Natural killer cell (primary cell): ENCODE measurements at regions of chr20 and their contacts with region 1.

Region 1: DNA sequence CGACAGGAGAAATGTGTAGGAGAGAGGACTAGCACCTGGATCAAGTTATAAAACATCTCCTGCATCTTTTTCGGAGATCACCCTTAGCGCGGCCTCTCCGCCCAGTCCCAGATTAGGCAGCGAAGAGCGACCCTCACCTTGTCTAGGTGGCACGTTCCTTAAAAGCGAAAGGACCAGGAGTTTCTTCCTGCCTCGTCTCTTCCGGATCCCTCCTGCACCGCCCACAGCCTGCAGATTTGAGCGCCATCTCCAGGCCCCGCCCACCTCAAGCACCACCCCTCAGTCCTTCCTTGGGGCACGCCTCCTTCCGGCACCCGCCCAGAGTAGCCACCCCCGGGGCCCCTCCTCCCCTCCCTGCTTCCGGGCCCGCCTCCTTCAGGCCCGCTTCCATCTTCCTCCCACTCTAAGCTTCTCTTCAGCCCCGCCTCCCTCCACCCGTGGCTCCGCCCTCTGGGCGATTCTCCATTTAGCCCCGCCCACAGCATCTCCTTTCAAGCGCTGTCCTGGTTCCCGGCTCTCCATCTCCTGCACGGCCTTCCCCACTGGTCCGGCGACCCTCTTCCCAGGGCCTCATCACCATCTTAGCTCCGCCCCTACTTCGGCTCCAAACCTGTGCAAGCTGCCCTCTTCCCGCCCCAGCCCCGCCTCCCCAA is 662 bp upstream of the RALY start:
- DNase-seq: peak; percentile 99
- ATAC-seq: peak; percentile 81 to 94 (median 83)
- H3K4me3 ChIP-seq: peak overlapping the region; percentile 99
- H3K4me3 Mint-ChIP-seq: peak overlapping the region; percentile 85
- H3K27ac ChIP-seq: peak overlapping the region; percentile 98
- H3K27ac Mint-ChIP-seq: peak overlapping the region; percentile 92 to 98
- H3K4me1 ChIP-seq: peaks cover 39% of the 10 kb centered on the region
- H3K4me1 Mint-ChIP-seq: peaks cover 61 to 71% of the 10 kb centered on the region in 2 donors
- H3K27me3 ChIP-seq: no peaks in the 10 kb centered on the region
- H3K27me3 Mint-ChIP-seq: no peaks in the 10 kb centered on the region
- CTCF ChIP-seq: no peak

Region 2: GRCh38 chr20:33810885-33811777 is 181.9 kb before region 1 on chr20 and contains the start of gene CHMP4B:
- intact Hi-C with region 1: loop called (anchors 5 kb)
- DNase-seq: peak; percentile 96 to 98
- ATAC-seq: peak; percentile 93 to 99 (median 98)
- H3K4me3 ChIP-seq: peak within 1 kb of the TSS; percentile 89
- H3K4me3 Mint-ChIP-seq: peak within 1 kb of the TSS; percentile 92
- H3K27ac ChIP-seq: peak within 1 kb of the TSS; percentile 54
- H3K27ac Mint-ChIP-seq: peak within 1 kb of the TSS; percentile 93 to 98
- H3K4me1 ChIP-seq: peaks cover 30% of the 10 kb centered on the region
- H3K4me1 Mint-ChIP-seq: peaks cover 36 to 38% of the 10 kb centered on the region in 2 donors
- H3K27me3 ChIP-seq: no peaks in the 10 kb centered on the region
- H3K27me3 Mint-ChIP-seq: no peaks in the 10 kb centered on the region
- CTCF ChIP-seq: no peak
- total RNA-seq, gene CHMP4B: 63.7 to 74.0 (median 70.0) TPM

Region 3: DNA sequence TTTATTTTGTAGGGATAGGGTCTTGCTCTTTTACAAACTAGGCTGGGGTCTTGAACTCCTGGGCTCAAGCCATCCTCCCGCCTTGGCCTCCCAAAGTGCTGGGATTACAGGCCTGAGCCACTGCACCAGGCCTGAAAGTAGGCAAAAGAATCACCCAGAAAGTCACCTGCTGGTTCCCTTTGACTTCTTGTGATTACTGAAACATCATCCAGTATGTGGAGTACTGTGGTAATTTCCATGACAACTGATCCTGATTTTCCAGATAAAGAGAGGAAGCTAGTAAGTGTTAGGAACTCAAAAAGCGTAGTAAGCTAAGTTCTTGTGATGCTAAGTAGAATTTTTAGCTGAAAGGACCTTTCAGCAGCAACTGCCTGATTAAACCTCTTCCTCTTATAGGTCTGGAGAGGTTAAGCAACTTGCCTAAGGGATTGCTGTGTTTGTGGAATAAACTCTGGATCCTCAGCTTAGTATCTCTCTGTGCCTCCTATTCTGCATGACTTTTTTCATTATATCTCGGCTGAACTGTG is 17.4 kb after region 1 on chr20:
- intact Hi-C with region 1: loop called (anchors 2 kb)
- DNase-seq: no peak
- ATAC-seq: no peak
- H3K4me3 ChIP-seq: no peak overlapping the region
- H3K4me3 Mint-ChIP-seq: peak overlapping the region; percentile 81
- H3K27ac ChIP-seq: peak overlapping the region; percentile 56
- H3K27ac Mint-ChIP-seq: peak overlapping the region; percentile 86
- H3K4me1 ChIP-seq: peaks cover 34% of the 10 kb centered on the region
- H3K4me1 Mint-ChIP-seq: peaks cover 85% of the 10 kb centered on the region in 2 donors
- H3K27me3 ChIP-seq: no peaks in the 10 kb centered on the region
- H3K27me3 Mint-ChIP-seq: no peaks in the 10 kb centered on the region
- CTCF ChIP-seq: no peak

Region 4: GRCh38 chr20:34045294-34045693 is 52.2 kb after region 1 on chr20:
- intact Hi-C with region 1: loop called (anchors 10 kb)
- DNase-seq: no peak
- ATAC-seq: no peak
- H3K4me3 ChIP-seq: no peak overlapping the region
- H3K4me3 Mint-ChIP-seq: no peak overlapping the region
- H3K27ac ChIP-seq: no peak overlapping the region
- H3K27ac Mint-ChIP-seq: peak overlapping the region; percentile 27 to 62
- H3K4me1 ChIP-seq: peaks cover 14% of the 10 kb centered on the region
- H3K4me1 Mint-ChIP-seq: peaks cover 86 to 89% of the 10 kb centered on the region in 2 donors
- H3K27me3 ChIP-seq: no peaks in the 10 kb centered on the region
- H3K27me3 Mint-ChIP-seq: no peaks in the 10 kb centered on the region
- CTCF ChIP-seq: no peak

Region 5: DNA sequence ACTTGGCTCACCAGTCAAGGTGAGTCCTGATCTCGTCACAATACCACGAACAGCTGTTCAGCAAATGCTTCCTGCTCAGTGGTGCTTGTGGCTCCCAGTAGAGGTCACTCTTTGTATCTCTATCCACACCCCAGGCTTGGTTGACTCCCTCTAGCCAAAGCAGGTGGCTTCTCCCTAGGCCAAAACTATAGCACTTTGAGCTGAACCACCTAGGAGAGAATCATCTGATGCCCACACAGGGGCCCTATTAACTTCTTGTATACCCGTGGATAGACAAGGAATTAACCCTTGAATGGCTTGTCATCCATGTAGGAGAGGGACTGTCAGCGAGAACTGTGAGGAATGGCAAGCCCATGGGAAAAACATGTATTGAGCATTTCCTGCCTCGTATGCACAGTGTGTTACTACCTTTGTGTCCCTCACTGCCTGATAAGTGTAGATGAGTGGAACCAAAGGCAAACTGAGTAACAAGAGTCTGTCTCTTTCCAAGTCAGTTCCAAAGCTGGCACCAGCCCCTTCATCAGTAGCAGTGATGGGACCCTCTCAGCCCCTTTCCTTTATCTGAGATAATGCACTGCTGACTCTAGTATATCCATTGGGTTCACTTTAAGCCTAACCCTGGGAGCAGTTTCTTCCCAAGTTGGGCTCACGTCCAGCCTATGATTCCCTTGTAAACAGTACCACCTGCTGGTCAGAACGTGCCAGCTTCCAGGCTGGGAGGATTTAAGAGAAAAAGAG is 76.5 kb after region 1 on chr20:
- intact Hi-C with region 1: loop called (anchors 5 kb)
- DNase-seq: peak; percentile 39 to 79
- ATAC-seq: peak; percentile 75 to 84 (median 82)
- H3K4me3 ChIP-seq: no peak overlapping the region
- H3K4me3 Mint-ChIP-seq: no peak overlapping the region
- H3K27ac ChIP-seq: no peak overlapping the region
- H3K27ac Mint-ChIP-seq: peak overlapping the region; percentile 81 to 82
- H3K4me1 ChIP-seq: peaks cover 9% of the 10 kb centered on the region
- H3K4me1 Mint-ChIP-seq: peaks cover 54 to 65% of the 10 kb centered on the region in 2 donors
- H3K27me3 ChIP-seq: no peaks in the 10 kb centered on the region
- H3K27me3 Mint-ChIP-seq: no peaks in the 10 kb centered on the region
- CTCF ChIP-seq: peak; percentile 69

Region 6: DNA sequence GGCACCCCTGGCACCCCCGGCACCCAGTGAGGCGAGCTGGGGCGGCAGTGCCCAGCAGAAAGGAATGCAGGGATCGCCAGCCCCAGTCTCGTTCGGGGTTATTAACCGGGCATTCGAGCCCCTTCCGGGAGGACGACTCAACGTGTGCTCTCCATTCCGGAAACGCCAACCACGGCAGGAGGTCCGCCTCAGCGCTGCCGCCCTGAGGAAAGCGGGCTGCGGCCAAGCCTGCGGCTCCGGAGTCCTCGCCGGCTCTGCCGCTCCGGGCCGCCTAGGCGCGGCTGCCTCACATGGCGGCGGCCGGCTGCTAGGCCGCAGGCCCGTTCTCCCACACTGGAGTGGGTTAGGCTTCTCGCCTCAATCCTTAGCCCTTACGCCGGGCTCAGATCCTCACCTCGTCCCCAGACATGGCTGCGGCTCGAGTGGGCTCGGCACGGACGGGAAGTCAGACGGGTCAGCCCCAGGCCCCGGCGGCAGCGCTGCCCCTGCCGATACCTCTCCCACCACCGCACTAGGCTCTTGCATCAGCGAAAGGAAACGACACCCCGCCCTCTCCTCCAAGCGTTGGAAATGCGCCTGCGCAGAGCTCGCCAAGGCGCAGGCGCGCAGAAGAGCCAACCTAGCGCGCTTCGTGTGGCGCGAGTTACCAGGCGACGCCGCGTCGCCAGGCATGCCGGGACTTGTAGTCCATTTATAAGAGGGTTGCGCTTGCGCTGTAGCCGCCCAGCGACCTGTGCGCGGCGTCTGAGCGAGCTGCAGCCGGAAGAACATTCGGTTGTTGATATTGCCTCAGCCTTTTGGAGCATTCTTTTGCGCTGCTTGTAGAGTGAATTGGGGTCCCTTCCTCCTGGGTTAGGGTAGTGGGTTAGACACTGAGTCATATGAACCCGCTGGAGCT is 118.9 kb after region 1 on chr20 and contains the start of gene EIF2S2:
- intact Hi-C with region 1: loop called (anchors 1 kb)
- DNase-seq: peak; percentile 91 to 100
- ATAC-seq: peak; percentile 85 to 95 (median 88)
- H3K4me3 ChIP-seq: peak within 1 kb of the TSS; percentile 98
- H3K4me3 Mint-ChIP-seq: peak within 1 kb of the TSS; percentile 93
- H3K27ac ChIP-seq: peak within 1 kb of the TSS; percentile 95
- H3K27ac Mint-ChIP-seq: peak within 1 kb of the TSS; percentile 95 to 99
- H3K4me1 ChIP-seq: peaks cover 26% of the 10 kb centered on the region
- H3K4me1 Mint-ChIP-seq: peaks cover 51 to 52% of the 10 kb centered on the region in 2 donors
- H3K27me3 ChIP-seq: no peaks in the 10 kb centered on the region
- H3K27me3 Mint-ChIP-seq: no peaks in the 10 kb centered on the region
- CTCF ChIP-seq: no peak
- total RNA-seq, gene EIF2S2: 17.6 to 20.0 (median 17.6) TPM